ENCODE measurements at regions of chr1 and their contacts with region 1.

Region 1: DNA sequence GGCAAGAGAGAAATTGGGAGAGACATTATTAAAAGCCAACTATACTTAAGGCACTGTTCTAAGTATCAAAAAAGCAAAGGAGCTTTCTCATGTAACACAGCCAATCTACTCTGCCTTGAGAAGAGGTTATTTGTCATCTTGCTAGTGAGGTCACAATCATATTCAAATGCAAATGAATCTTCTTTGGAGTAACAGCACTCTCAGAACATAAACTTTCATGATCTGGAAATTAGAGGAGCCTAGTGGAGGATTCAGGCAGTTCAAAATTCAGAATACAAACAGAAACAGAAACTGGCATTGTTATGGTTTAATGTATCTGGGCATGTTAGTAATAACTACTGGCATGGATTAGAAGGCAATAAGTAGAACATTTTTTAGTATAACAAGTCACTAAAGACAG is 57.4 kb downstream of the ARID4B start:
- DNase-seq: no peak
- ATAC-seq: peak; percentile 63
- H3K4me3 Mint-ChIP-seq: no peak overlapping the region
- H3K27ac Mint-ChIP-seq: peak overlapping the region; percentile 0
- H3K4me1 Mint-ChIP-seq: peaks cover 27% of the 10 kb centered on the region
- H3K27me3 Mint-ChIP-seq: no peaks in the 10 kb centered on the region

Region 2: GRCh38 chr1:234899041-234899729 is 371.4 kb before region 1 on chr1:
- CTCF ChIA-PET with region 1: no interaction called
- POLR2A ChIA-PET with region 1: no interaction called
- DNase-seq: no peak
- ATAC-seq: no peak
- H3K4me3 Mint-ChIP-seq: no peak overlapping the region
- H3K27ac Mint-ChIP-seq: no peak overlapping the region
- H3K4me1 Mint-ChIP-seq: peaks cover 8% of the 10 kb centered on the region
- H3K27me3 Mint-ChIP-seq: no peaks in the 10 kb centered on the region

Region 3: DNA sequence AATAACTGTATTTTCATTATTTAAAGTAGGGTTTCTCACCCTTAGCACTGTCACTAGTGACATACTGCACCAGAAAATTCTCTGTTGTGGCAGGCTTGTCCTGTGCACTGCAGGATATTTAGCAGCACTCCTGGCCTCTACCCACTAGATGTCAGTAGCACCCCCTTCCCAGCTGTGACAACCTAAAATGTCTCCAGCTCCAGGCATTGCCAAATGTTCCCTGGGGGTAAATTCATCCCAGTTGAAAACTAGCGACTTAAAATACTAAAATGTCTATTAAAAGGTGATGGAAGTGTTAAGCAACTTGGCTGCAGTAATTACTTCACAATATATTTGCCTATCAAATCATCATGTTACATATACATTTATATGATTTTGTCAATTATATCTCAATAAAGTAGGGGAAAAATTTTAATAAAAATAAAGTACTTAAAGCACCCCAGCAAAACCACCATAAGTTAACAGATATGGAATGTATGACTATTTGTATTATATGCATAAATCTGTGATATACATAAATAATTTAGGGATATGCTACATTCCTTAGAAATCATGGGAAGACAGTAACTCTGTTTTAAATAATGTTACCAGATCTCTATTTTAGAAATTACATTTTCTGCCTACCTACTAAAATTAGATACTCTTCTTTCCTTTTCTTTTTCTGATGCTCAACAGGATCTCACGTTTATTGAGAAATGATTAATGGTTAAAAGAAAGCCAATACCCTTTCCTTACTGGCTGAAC is 17.2 kb before region 1 on chr1:
- CTCF ChIA-PET with region 1: interaction called, 14 read pairs
- POLR2A ChIA-PET with region 1: no interaction called
- DNase-seq: peak; percentile 71
- ATAC-seq: peak; percentile 97
- H3K4me3 Mint-ChIP-seq: no peak overlapping the region
- H3K27ac Mint-ChIP-seq: no peak overlapping the region
- H3K4me1 Mint-ChIP-seq: peaks cover 23% of the 10 kb centered on the region
- H3K27me3 Mint-ChIP-seq: no peaks in the 10 kb centered on the region

Region 4: GRCh38 chr1:235259133-235259778 is 11.4 kb before region 1 on chr1:
- CTCF ChIA-PET with region 1: interaction called, 14 read pairs
- POLR2A ChIA-PET with region 1: interaction called, 4 read pairs
- DNase-seq: no peak
- ATAC-seq: peak; percentile 54
- H3K4me3 Mint-ChIP-seq: no peak overlapping the region
- H3K27ac Mint-ChIP-seq: peak overlapping the region; percentile 23
- H3K4me1 Mint-ChIP-seq: peaks cover 38% of the 10 kb centered on the region
- H3K27me3 Mint-ChIP-seq: no peaks in the 10 kb centered on the region